HEK293 (cell line): ENCODE measurements at regions of chr19 and their contacts with region 1.

Region 1: GRCh38 chr19:17052439-17053210 is 22.6 kb downstream of the HAUS8 start:
- H3K4me3 ChIP-seq: no peak overlapping the region
- H3K27ac ChIP-seq: no peak overlapping the region
- H3K4me1 ChIP-seq: no peaks in the 10 kb centered on the region
- CTCF ChIP-seq: peak; percentile 57; the same call in 1 of the 2 replicates

Region 2: DNA sequence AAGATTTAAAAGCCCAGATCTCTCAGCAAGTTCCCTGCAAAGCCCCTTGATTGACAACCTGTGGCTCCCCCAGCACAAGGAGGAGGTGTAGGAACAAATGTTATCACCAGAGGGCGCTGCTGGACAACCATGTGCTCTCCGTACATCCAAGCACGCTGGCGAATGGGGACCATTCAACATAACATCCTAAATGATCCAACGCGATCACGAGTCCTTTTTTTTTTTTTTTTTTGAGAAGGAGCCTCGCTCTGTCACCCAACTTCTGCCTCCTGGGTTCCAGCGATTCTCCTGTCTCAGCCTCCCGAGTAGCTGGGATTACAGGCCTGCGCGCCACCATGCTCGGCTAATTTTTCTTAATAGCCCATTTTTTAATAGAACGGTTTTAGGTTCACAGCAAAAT is 281.0 kb before region 1 on chr19:
- CTCF ChIA-PET with region 1: interaction called, 11 read pairs
- POLR2A ChIA-PET with region 1: no interaction called
- H3K4me3 ChIP-seq: no peak overlapping the region
- H3K27ac ChIP-seq: no peak overlapping the region
- H3K4me1 ChIP-seq: no peaks in the 10 kb centered on the region; the same call in 1 of the 2 replicates
- CTCF ChIP-seq: peak; percentile 66

Region 3: GRCh38 chr19:16778796-16779411 is 273.7 kb before region 1 on chr19:
- CTCF ChIA-PET with region 1: interaction called, 12 read pairs
- POLR2A ChIA-PET with region 1: no interaction called
- H3K4me3 ChIP-seq: no peak overlapping the region
- H3K27ac ChIP-seq: no peak overlapping the region
- H3K4me1 ChIP-seq: no peaks in the 10 kb centered on the region
- CTCF ChIP-seq: peak; percentile 87